T-cell (primary cell): ENCODE measurements at regions of chr7 and their contacts with region 1.

Region 1: DNA sequence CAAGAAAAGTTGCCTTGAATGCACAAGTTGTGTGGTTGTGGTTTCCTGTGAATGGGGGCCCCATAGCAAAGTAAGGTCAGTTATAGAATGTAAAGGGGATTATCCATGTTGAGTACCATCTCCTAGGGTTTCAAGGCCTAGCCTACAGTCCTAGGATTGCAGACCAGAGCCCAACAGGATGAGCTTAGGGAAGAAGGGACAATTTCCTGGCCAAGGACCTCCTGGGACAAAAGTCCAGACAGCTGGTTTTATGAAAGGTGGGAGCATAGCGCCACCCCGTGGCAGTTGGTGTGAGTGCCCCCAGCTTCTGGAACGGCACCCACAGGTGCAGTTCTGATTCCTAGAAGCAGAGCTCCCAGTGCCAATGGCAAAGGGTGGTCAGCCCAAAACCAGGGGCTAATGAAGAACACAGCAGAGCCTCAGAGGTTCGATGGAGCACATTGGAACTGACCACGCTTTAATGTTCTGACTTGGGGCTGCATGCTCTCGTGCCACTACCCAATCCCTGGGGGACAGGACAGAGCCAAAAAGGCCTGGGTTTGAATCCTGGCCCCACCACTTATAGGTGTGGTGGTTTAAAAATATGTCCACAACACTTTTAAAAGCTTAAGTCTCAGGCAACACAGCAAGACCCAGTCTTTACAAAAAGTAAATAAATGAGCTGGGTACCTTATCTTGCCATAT is 25.8 kb upstream of the TMEM120A start:
- DNase-seq: peak; percentile 12 to 87 (median 61)
- ATAC-seq: peak; percentile 50 to 65 (median 56)
- H3K4me3 ChIP-seq: no peak overlapping the region
- H3K4me3 Mint-ChIP-seq: no peak overlapping the region
- H3K27ac ChIP-seq: no peak overlapping the region
- H3K27ac Mint-ChIP-seq: no peak overlapping the region
- H3K4me1 ChIP-seq: peaks cover 4 to 11% of the 10 kb centered on the region in 2 experiments
- H3K4me1 Mint-ChIP-seq: peaks cover 0 to 15% (median 11%) of the 10 kb centered on the region in 3 donors
- H3K27me3 ChIP-seq: no peaks in the 10 kb centered on the region
- H3K27me3 Mint-ChIP-seq: no peaks in the 10 kb centered on the region

Region 2: DNA sequence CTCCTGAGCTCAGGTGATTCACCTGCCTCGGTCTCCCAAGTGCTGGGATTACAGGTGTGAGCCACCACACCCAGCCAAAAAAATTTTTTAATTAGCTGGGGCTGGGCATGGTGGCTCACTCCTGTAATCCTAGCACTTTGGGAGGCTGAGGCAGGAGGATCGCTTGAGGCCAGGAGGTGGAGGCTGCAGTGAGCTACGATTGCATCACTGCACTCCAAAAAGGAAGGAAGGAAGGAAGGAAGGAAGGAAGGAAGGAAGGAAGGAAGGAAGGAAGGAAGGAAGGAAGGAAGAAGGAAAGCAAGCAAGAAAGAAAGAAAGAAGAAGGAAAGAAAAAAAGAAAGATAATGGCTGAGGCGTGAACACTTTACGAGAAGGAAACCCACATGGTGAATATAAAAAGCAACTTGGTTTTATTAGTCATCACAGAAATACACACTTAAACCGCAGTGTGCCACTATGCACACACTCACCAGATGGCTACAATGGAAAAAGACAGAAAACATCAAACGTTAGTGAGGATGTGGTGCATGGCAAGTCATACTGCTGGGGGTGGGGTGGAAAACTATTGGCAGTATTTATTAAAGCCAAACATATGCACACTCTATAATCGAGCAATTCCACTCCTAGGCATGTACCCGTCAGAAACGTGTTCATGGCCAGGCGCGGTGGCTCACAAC is 243.7 kb before region 1 on chr7:
- CTCF ChIA-PET with region 1: no interaction called
- POLR2A ChIA-PET with region 1: interaction called in 1 of 2 experiments, 12 read pairs
- DNase-seq: peak in 26 of 35 experiments; percentile 0 to 62 (median 15)
- ATAC-seq: peak; percentile 70 to 92 (median 83)
- H3K4me3 ChIP-seq: no peak overlapping the region
- H3K4me3 Mint-ChIP-seq: no peak overlapping the region
- H3K27ac ChIP-seq: peak overlapping the region; percentile 20
- H3K27ac Mint-ChIP-seq: peak overlapping the region; percentile 57 to 77
- H3K4me1 ChIP-seq: peaks cover 0 to 17% of the 10 kb centered on the region in 2 experiments
- H3K4me1 Mint-ChIP-seq: peaks cover 7 to 11% (median 9%) of the 10 kb centered on the region in 3 donors
- H3K27me3 ChIP-seq: peaks cover 0 to 2% of the 10 kb centered on the region in 2 experiments
- H3K27me3 Mint-ChIP-seq: peaks cover 3 to 10% of the 10 kb centered on the region in 2 donors

Region 3: GRCh38 chr7:75866489-75867389 is 153.4 kb before region 1 on chr7:
- CTCF ChIA-PET with region 1: interaction called, 22 to 29 read pairs
- POLR2A ChIA-PET with region 1: interaction called in 1 of 2 experiments, 4 read pairs
- DNase-seq: peak in 31 of 35 experiments; percentile 3 to 71 (median 30)
- ATAC-seq: peak; percentile 70 to 79 (median 72)
- H3K4me3 ChIP-seq: no peak overlapping the region
- H3K4me3 Mint-ChIP-seq: peak overlapping the region in 1 of 3 donors; percentile 25
- H3K27ac ChIP-seq: no peak overlapping the region
- H3K27ac Mint-ChIP-seq: no peak overlapping the region
- H3K4me1 ChIP-seq: peaks cover 0 to 11% of the 10 kb centered on the region in 2 experiments
- H3K4me1 Mint-ChIP-seq: peaks cover 5 to 9% (median 5%) of the 10 kb centered on the region in 3 donors
- H3K27me3 ChIP-seq: peaks cover 0 to 27% of the 10 kb centered on the region in 2 experiments
- H3K27me3 Mint-ChIP-seq: peaks cover 13% of the 10 kb centered on the region in 2 donors

Region 4: DNA sequence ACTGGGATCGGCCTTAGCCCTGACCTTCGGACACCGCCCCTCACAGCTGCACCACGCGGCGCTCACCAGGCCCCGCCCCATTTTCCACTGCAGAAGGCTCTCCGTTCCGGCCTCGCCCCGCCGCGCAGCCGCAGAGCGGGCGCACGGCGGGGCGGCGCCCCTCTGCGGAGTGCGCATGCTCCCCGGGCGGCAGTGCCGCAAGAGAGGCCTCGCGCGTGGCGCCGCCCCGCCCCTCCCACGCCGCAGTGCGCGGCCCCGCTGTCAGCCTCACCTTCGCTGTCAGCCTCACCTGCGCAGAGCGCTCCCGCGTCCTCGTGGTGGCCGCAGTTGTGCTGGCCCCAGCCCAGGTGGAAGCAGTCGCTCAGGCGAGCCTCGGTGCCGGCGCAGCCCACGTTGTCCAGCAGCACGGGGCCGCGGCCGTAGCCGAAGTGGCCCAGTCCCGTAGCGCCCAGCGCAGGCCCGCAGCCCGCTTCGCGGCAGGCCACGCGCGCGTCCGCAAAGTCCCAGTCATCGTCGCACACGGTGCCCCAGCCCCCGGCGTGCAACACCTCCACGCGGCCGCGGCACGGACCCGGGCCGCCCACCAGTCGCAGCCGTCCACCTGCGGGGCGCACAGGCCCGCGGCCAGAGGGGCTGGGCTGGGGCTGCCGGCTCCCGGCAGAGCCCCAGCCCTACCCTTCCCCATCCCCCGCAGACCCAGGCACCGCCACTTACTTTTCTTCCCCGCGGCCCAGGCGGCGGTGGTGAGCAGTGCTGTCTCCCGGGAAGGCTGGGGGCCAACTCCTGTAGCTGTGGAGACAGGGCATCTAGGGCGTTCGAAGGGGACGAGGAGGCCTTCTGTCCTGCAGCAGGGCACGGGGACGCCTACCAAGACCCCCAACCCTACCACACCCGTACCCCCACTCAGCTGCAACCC is 373.2 kb after region 1 on chr7:
- CTCF ChIA-PET with region 1: no interaction called
- POLR2A ChIA-PET with region 1: no interaction called
- DNase-seq: peak; percentile 75 to 95 (median 86)
- ATAC-seq: peak; percentile 80 to 85 (median 83)
- H3K4me3 ChIP-seq: peak overlapping the region; percentile 41 to 45
- H3K4me3 Mint-ChIP-seq: peak overlapping the region; percentile 77 to 85 (median 84)
- H3K27ac ChIP-seq: no peak overlapping the region
- H3K27ac Mint-ChIP-seq: peak overlapping the region; percentile 89 to 95
- H3K4me1 ChIP-seq: peaks cover 7 to 33% of the 10 kb centered on the region in 2 experiments
- H3K4me1 Mint-ChIP-seq: peaks cover 8 to 27% (median 24%) of the 10 kb centered on the region in 3 donors
- H3K27me3 ChIP-seq: peaks cover 0 to 4% of the 10 kb centered on the region in 2 experiments
- H3K27me3 Mint-ChIP-seq: no peaks in the 10 kb centered on the region